Sigmoid colon (tissue), 7 donors: ENCODE measurements at regions of chr2 and their contacts with region 1.

Region 1: DNA sequence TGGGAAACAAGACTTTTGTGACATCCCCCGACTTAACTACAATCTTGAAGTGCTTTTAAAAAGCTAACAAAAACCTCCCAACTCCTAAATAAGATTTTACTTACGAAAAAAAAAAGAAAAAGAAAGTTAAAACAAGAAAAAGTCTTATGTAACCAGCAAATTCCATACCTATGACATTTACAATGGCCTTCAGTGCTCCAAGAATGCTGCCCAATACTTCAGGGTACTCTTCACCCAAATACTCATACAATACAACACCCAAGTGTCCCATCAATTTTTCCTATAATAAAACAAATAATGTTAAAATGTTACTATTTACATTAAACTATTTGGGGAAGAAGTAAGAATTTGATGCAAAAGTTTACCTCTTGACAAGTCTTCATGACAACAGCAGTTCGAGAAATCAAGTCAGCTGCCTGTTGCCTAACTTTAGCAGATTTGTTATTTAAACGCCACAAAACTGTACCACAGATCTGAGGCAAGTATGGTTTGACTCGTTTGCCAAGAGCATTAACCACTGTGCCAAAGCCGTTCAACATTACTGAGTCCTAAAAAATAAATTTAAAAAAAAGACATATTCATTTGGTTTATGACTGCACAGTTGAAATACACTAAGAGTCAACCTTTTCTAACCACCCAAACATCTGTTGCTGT is 34.8 kb downstream of the SF3B1 start:
- DNase-seq: no peak
- H3K4me3 ChIP-seq: no peak overlapping the region
- H3K27ac ChIP-seq: no peak overlapping the region
- H3K4me1 ChIP-seq: no peaks in the 10 kb centered on the region
- H3K27me3 ChIP-seq: no peaks in the 10 kb centered on the region
- CTCF ChIP-seq: no peak
- EP300 ChIP-seq: no peak
- POLR2A ChIP-seq: no peak

Region 2: DNA sequence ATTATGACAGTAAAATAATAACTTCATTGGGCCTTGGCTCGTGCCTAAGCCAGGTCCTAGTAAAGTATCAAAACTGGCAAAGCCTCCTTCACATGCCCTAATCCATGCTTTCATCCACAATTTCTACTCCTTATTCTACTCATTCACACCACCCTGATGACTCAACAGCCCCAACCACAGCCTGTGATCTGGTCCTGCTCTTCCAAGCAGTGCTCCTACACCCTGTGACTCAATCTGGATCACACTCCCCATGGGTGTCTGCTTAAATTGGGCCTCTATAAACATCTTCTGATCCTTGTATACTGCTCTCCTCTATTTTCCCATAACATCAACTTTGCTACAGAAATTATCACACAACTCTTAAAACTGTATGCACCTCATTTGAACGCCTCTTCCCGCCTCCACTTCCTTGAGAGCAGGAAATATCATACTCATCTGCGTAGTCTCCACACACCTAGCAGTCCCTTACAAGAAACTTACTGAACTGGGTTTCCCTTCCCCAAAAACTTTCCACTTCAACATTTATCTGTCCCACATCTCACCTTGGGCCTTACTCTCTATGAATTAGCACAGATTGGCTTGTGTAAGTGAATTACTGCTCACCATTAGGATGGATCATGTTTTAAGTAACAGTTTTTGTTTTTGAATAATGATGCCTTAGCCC is 616.5 kb before region 1 on chr2:
- intact Hi-C with region 1: loop called (anchors 10 kb)
- DNase-seq: no peak
- H3K4me3 ChIP-seq: no peak overlapping the region
- H3K27ac ChIP-seq: no peak overlapping the region
- H3K4me1 ChIP-seq: no peaks in the 10 kb centered on the region
- H3K27me3 ChIP-seq: no peaks in the 10 kb centered on the region
- CTCF ChIP-seq: no peak
- EP300 ChIP-seq: no peak
- POLR2A ChIP-seq: no peak

Region 3: GRCh38 chr2:196798980-196799379 is 601.0 kb before region 1 on chr2:
- intact Hi-C with region 1: loop called (anchors 10 kb)
- DNase-seq: no peak
- H3K4me3 ChIP-seq: peak overlapping the region; percentile 59 to 73 (median 70)
- H3K27ac ChIP-seq: peak overlapping the region; percentile 76 to 82 (median 78)
- H3K4me1 ChIP-seq: peaks cover 0 to 30% (median 15%) of the 10 kb centered on the region in 4 donors
- H3K27me3 ChIP-seq: peaks cover 0 to 8% (median 0%) of the 10 kb centered on the region in 3 donors
- CTCF ChIP-seq: no peak
- EP300 ChIP-seq: no peak
- POLR2A ChIP-seq: no peak

Region 4: DNA sequence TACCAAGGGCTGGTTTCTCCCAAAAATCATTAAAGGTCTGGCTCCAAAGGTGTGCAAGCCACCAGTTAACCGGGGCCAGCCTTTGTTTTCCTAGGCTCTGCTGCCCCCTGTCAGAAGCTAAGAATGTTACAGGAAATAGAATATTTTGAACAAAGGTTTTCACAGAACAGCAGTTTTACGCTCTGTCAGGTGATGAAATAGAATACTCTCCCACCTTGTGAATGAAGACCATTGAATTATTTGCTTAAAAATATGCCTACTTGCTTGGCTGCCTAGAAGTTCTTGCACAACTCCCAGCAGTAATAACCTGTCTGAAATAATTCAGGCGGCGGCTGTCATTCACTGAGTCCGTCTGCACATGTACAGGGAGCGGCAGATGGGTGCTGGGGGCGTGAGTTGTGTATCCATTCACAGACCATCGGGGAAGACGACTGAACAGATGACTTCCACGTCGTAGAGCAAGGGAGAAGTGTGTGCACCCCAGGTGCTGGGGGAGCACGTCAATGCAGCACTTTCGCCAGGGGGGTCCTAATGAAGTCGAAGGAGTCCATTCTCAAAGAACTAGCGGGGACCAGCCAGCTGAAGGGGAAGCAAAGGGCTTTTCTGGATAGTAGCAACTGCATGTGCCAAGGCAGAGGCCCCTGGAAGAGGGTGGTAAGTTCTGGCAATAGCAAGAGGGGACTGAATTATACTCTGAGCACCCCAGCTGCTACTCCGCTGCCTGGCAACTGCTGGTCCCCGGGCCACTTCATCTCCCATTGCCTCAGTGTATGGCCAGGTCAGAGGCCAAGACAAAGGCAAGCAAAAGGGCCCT is 21.3 kb before region 1 on chr2:
- intact Hi-C with region 1: no loop called
- DNase-seq: no peak
- H3K4me3 ChIP-seq: no peak overlapping the region
- H3K27ac ChIP-seq: no peak overlapping the region
- H3K4me1 ChIP-seq: peaks cover 0 to 8% (median 3%) of the 10 kb centered on the region in 4 donors
- H3K27me3 ChIP-seq: no peaks in the 10 kb centered on the region
- CTCF ChIP-seq: peak; percentile 54 to 71 (median 62)
- EP300 ChIP-seq: no peak
- POLR2A ChIP-seq: no peak

Region 5: GRCh38 chr2:197728338-197729207 is 328.6 kb after region 1 on chr2:
- intact Hi-C with region 1: no loop called
- DNase-seq: no peak
- H3K4me3 ChIP-seq: no peak overlapping the region
- H3K27ac ChIP-seq: no peak overlapping the region
- H3K4me1 ChIP-seq: no peaks in the 10 kb centered on the region
- H3K27me3 ChIP-seq: no peaks in the 10 kb centered on the region
- CTCF ChIP-seq: no peak
- EP300 ChIP-seq: no peak
- POLR2A ChIP-seq: no peak